Ascending aorta (tissue), 2 donors: ENCODE measurements at regions of chr11 and their contacts with region 1.

Region 1: GRCh38 chr11:32792948-32793475 is 1.4 kb downstream of the CCDC73 start:
- DNase-seq: no peak
- H3K4me3 ChIP-seq: peak overlapping the region; percentile 22 to 33
- H3K27ac ChIP-seq: no peak overlapping the region
- H3K4me1 ChIP-seq: no peaks in the 10 kb centered on the region
- H3K27me3 ChIP-seq: no peaks in the 10 kb centered on the region
- CTCF ChIP-seq: peak; percentile 39 to 59 (median 50)

Region 2: DNA sequence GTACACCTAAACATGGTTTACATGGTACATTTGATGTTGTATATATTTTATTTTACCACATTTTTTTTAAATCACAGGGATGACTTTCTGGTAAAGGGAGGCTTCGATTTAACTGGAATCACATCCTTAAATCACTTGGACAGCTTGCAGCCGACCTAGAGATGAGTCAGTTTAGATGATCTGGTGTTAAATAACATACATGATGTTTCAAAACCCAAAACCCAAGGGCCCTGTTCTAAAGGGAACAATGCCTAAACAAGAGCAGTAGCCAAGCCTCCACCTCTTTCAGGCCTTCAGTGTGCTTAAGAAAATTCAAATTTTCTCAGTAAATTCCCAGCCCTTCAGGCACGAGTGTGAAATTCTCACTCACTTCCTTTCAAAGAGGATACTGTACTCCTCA is 466.5 kb before region 1 on chr11:
- intact Hi-C with region 1: loop called (anchors 10 kb)
- DNase-seq: no peak
- H3K4me3 ChIP-seq: no peak overlapping the region
- H3K27ac ChIP-seq: no peak overlapping the region
- H3K4me1 ChIP-seq: no peaks in the 10 kb centered on the region
- H3K27me3 ChIP-seq: no peaks in the 10 kb centered on the region
- CTCF ChIP-seq: no peak

Region 3: GRCh38 chr11:32729976-32730375 is 63.0 kb before region 1 on chr11:
- intact Hi-C with region 1: no loop called
- DNase-seq: no peak
- H3K4me3 ChIP-seq: no peak overlapping the region
- H3K27ac ChIP-seq: no peak overlapping the region
- H3K4me1 ChIP-seq: no peaks in the 10 kb centered on the region
- H3K27me3 ChIP-seq: no peaks in the 10 kb centered on the region
- CTCF ChIP-seq: no peak

Region 4: DNA sequence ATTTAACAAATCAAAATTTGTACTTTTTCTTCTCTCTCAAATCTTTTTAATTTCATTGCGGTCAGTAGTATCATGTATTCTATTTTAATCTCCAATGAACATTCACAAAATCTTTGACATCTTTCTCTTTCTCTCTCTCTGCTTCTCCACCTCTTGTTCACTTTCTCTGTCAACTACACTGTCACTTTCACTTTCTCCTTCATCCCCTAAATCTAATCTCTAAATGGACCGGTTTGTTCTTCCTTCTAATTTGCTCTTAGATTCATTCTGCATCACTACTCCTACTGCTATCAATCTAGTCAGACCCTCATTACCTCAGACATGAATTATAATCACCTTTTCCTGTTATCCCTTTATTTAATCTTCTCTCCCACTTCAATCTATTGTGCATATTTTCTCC is 17.1 kb before region 1 on chr11:
- intact Hi-C with region 1: no loop called
- DNase-seq: no peak
- H3K4me3 ChIP-seq: no peak overlapping the region
- H3K27ac ChIP-seq: no peak overlapping the region
- H3K4me1 ChIP-seq: no peaks in the 10 kb centered on the region
- H3K27me3 ChIP-seq: no peaks in the 10 kb centered on the region
- CTCF ChIP-seq: no peak